Activated CD8-positive, alpha-beta T cell treated with anti-CD3 and anti-CD28 coated beads for 36 hours (primary cell): ENCODE measurements at regions of chr5 and their contacts with region 1.

Region 1: GRCh38 chr5:9544502-9545135 is 1.3 kb downstream of the SEMA5A start:
- DNase-seq: peak; percentile 53
- ATAC-seq: no peak
- H3K4me3 Mint-ChIP-seq: no peak overlapping the region
- H3K27ac Mint-ChIP-seq: no peak overlapping the region
- H3K4me1 Mint-ChIP-seq: peaks cover 4% of the 10 kb centered on the region
- H3K27me3 Mint-ChIP-seq: peaks cover 24% of the 10 kb centered on the region
- CTCF ChIP-seq: peak; percentile 69

Region 2: GRCh38 chr5:7927466-7928375 is 1616.9 kb before region 1 on chr5:
- CTCF ChIA-PET with region 1: no interaction called
- POLR2A ChIA-PET with region 1: no interaction called
- intact Hi-C with region 1: loop called (anchors 10 kb)
- DNase-seq: peak; percentile 64
- ATAC-seq: peak; percentile 80
- H3K4me3 Mint-ChIP-seq: no peak overlapping the region
- H3K27ac Mint-ChIP-seq: no peak overlapping the region
- H3K4me1 Mint-ChIP-seq: no peaks in the 10 kb centered on the region
- H3K27me3 Mint-ChIP-seq: peaks cover 6% of the 10 kb centered on the region
- CTCF ChIP-seq: peak; percentile 76

Region 3: GRCh38 chr5:9562141-9562540 is 17.5 kb after region 1 on chr5:
- CTCF ChIA-PET with region 1: no interaction called
- POLR2A ChIA-PET with region 1: no interaction called
- intact Hi-C with region 1: no loop called
- DNase-seq: no peak
- ATAC-seq: no peak
- H3K4me3 Mint-ChIP-seq: no peak overlapping the region
- H3K27ac Mint-ChIP-seq: no peak overlapping the region
- H3K4me1 Mint-ChIP-seq: no peaks in the 10 kb centered on the region
- H3K27me3 Mint-ChIP-seq: no peaks in the 10 kb centered on the region
- CTCF ChIP-seq: no peak

Region 4: GRCh38 chr5:9626955-9627354 is 82.3 kb after region 1 on chr5:
- CTCF ChIA-PET with region 1: no interaction called
- POLR2A ChIA-PET with region 1: no interaction called
- intact Hi-C with region 1: no loop called
- DNase-seq: no peak
- ATAC-seq: no peak
- H3K4me3 Mint-ChIP-seq: no peak overlapping the region
- H3K27ac Mint-ChIP-seq: no peak overlapping the region
- H3K4me1 Mint-ChIP-seq: no peaks in the 10 kb centered on the region
- H3K27me3 Mint-ChIP-seq: no peaks in the 10 kb centered on the region
- CTCF ChIP-seq: no peak